HepG2 (cell line): ENCODE measurements at regions of chr9 and their contacts with region 1.

Region 1: DNA sequence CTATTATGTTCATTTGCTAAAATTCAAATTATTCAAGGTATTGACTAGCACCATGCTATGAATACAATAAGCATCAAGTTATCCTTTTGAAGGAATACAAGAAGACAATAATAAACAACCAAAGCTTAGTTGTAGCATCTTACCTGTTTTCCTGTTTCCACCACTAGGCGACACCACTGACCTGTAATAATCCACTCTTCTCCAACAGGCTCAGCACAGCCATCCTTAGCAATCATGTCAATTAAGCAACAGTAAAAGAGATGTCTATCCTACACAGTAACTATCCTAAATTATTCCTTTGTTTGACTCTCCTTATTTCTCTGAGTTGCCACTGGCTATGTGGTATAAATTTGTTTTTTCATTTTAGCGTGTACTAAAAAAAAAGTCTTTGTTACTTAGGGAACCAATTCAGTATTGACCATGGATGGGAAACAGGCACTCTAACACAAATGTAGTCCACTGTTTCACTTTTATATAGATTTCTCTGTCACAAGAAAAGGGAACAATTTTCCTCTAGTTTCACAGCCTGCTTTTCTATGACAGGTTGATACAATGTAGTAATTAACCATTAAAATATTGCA is 46.2 kb downstream of the PCA3 start:
- DNase-seq: peak; percentile 33
- ATAC-seq: peak; percentile 81
- H3K4me3 ChIP-seq: no peak overlapping the region
- H3K27ac ChIP-seq: no peak overlapping the region
- H3K4me1 ChIP-seq: no peaks in the 10 kb centered on the region
- H3K27me3 ChIP-seq: peaks cover 0 to 5% of the 10 kb centered on the region in 2 experiments; a peak in 1 of 5 replicates
- CTCF ChIP-seq: peak; percentile 80
- EP300 ChIP-seq: no peak
- POLR2A ChIP-seq: no peak
- RAD21 ChIP-seq: peak; percentile 53; the same call in 1 of the 2 replicates

Region 2: DNA sequence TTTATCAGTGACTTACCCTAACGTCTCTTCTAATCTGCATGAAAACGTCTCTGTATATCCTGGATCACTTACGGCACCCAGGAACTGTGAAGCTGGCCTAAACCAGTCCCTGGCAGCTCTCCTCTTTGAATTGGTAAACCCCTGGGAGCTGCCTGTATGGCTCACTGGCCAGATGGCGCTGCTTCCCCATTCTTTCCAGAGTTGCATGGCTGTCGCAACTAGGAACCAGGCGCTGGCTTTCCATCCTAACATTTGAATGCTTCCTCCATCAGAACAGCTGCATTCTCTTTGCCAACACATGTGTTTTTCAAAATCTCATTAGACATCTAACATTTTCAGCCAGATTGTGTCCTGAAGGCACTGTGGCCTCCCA is 54.2 kb before region 1 on chr9:
- CTCF ChIA-PET with region 1: no interaction called
- POLR2A ChIA-PET with region 1: no interaction called
- in situ Hi-C with region 1: no loop called
- intact Hi-C with region 1: no loop called
- DNase-seq: peak; percentile 7
- ATAC-seq: peak; percentile 88
- H3K4me3 ChIP-seq: no peak overlapping the region
- H3K27ac ChIP-seq: no peak overlapping the region
- H3K4me1 ChIP-seq: no peaks in the 10 kb centered on the region
- H3K27me3 ChIP-seq: no peaks in the 10 kb centered on the region
- CTCF ChIP-seq: peak; percentile 55
- EP300 ChIP-seq: no peak
- POLR2A ChIP-seq: no peak
- RAD21 ChIP-seq: no peak

Region 3: GRCh38 chr9:76773036-76773435 is 37.4 kb before region 1 on chr9:
- CTCF ChIA-PET with region 1: no interaction called
- POLR2A ChIA-PET with region 1: no interaction called
- in situ Hi-C with region 1: no loop called
- intact Hi-C with region 1: no loop called
- DNase-seq: no peak
- ATAC-seq: no peak
- H3K4me3 ChIP-seq: no peak overlapping the region
- H3K27ac ChIP-seq: no peak overlapping the region
- H3K4me1 ChIP-seq: no peaks in the 10 kb centered on the region
- H3K27me3 ChIP-seq: no peaks in the 10 kb centered on the region; a peak in 1 of 5 replicates
- CTCF ChIP-seq: no peak
- EP300 ChIP-seq: no peak
- POLR2A ChIP-seq: no peak
- RAD21 ChIP-seq: no peak

Region 4: DNA sequence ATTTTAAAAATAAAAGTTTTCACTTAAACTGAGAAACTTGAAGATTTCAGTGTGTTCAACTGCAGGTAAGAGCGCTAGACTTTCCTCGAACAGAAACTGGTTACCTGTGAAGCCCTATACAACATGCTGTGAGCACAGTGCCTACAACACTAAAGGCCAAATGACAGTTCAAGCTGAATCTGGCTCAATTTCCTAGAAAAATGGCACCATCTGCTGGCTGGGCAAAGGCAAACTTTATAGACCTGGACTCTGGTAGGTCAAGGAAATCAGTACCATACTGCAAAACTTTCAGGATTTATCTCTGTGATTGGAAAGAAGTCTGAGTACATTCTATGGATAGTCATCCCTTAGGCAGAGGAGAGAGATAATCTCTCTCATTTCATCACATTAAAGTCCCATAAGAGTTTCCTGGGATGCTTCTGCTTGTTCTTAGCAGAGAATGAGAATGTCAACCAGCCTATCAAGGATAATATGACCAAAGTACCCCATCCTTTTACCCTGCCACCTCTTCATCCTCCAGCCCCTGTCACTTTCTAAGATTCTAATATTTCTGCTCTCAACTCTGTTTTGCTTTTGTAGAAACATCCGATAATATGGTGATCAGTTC is 177.2 kb after region 1 on chr9:
- CTCF ChIA-PET with region 1: interaction called, 10 read pairs
- POLR2A ChIA-PET with region 1: no interaction called
- in situ Hi-C with region 1: loop called (anchors 10 kb)
- intact Hi-C with region 1: no loop called
- DNase-seq: peak; percentile 21
- ATAC-seq: peak; percentile 77
- H3K4me3 ChIP-seq: no peak overlapping the region
- H3K27ac ChIP-seq: no peak overlapping the region
- H3K4me1 ChIP-seq: no peaks in the 10 kb centered on the region
- H3K27me3 ChIP-seq: no peaks in the 10 kb centered on the region
- CTCF ChIP-seq: peak; percentile 50
- EP300 ChIP-seq: no peak
- POLR2A ChIP-seq: no peak
- RAD21 ChIP-seq: no peak

Region 5: GRCh38 chr9:76996700-76997099 is 186.2 kb after region 1 on chr9:
- CTCF ChIA-PET with region 1: interaction called, 12 read pairs
- POLR2A ChIA-PET with region 1: no interaction called
- in situ Hi-C with region 1: no loop called
- intact Hi-C with region 1: loop called (anchors 1 kb)
- DNase-seq: peak; percentile 12
- ATAC-seq: peak; percentile 96
- H3K4me3 ChIP-seq: no peak overlapping the region
- H3K27ac ChIP-seq: no peak overlapping the region
- H3K4me1 ChIP-seq: no peaks in the 10 kb centered on the region
- H3K27me3 ChIP-seq: no peaks in the 10 kb centered on the region
- CTCF ChIP-seq: peak; percentile 77
- EP300 ChIP-seq: no peak
- POLR2A ChIP-seq: no peak
- RAD21 ChIP-seq: peak; percentile 19; the same call in 1 of the 2 replicates

Region 6: GRCh38 chr9:77011973-77012821 is 201.7 kb after region 1 on chr9:
- CTCF ChIA-PET with region 1: interaction called, 15 read pairs
- POLR2A ChIA-PET with region 1: no interaction called
- in situ Hi-C with region 1: no loop called
- intact Hi-C with region 1: loop called (anchors 1 kb)
- DNase-seq: peak; percentile 20
- ATAC-seq: peak; percentile 96
- H3K4me3 ChIP-seq: no peak overlapping the region; a peak in 1 of 6 replicates
- H3K27ac ChIP-seq: no peak overlapping the region
- H3K4me1 ChIP-seq: no peaks in the 10 kb centered on the region
- H3K27me3 ChIP-seq: peaks cover 4 to 54% of the 10 kb centered on the region in 2 experiments
- CTCF ChIP-seq: peak; percentile 88
- EP300 ChIP-seq: no peak
- POLR2A ChIP-seq: no peak
- RAD21 ChIP-seq: peak; percentile 38; the same call in 1 of the 2 replicates

Region 7: DNA sequence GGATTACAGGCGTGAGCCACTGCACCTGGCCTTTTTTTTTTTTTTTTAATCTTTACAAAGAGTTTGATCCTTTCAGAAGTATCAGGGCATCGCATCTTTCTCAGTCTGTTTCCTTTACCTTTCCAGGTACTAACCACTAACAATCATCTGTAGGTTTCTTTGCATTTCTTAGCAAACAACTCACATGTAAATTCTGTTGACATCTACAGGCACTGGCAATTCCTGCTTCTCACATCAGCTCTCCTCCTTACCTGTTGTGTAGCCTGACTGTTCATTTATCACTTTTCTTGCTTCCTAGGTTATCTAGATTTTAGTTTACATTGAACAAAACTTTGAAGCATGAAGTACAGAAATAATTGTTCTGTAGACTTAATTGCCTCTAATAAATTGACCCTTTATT is 339.4 kb after region 1 on chr9:
- CTCF ChIA-PET with region 1: interaction called, 17 read pairs
- POLR2A ChIA-PET with region 1: no interaction called
- in situ Hi-C with region 1: loop called (anchors 25 kb)
- intact Hi-C with region 1: no loop called
- DNase-seq: no peak
- ATAC-seq: no peak
- H3K4me3 ChIP-seq: no peak overlapping the region
- H3K27ac ChIP-seq: no peak overlapping the region
- H3K4me1 ChIP-seq: no peaks in the 10 kb centered on the region
- H3K27me3 ChIP-seq: no peaks in the 10 kb centered on the region
- CTCF ChIP-seq: no peak
- EP300 ChIP-seq: no peak
- POLR2A ChIP-seq: no peak
- RAD21 ChIP-seq: no peak

Region 8: DNA sequence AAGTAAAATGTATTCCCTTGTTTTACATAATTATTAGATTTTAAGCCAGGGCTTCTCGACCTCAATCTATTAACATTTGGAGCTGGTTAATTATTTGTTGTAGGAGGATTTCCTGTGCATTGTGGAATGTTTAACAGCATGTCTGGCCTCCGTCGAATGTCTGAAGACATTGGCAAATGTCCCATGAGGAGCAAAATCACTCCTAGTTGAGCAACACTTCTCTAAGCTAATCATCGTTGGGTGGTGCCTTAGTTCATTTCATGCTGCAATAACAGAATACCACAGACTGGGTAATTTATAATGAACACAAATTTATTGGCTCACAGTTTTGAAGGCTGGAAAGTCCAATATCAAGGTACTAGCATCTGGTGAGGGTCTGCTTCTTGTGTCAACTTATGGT is 353.4 kb after region 1 on chr9:
- CTCF ChIA-PET with region 1: no interaction called
- POLR2A ChIA-PET with region 1: no interaction called
- in situ Hi-C with region 1: loop called (anchors 25 kb)
- intact Hi-C with region 1: no loop called
- DNase-seq: no peak
- ATAC-seq: no peak
- H3K4me3 ChIP-seq: no peak overlapping the region
- H3K27ac ChIP-seq: no peak overlapping the region
- H3K4me1 ChIP-seq: no peaks in the 10 kb centered on the region
- H3K27me3 ChIP-seq: no peaks in the 10 kb centered on the region
- CTCF ChIP-seq: no peak
- EP300 ChIP-seq: no peak
- POLR2A ChIP-seq: no peak
- RAD21 ChIP-seq: no peak